ENCODE measurements at regions of chr1 and their contacts with region 1.

Region 1: DNA sequence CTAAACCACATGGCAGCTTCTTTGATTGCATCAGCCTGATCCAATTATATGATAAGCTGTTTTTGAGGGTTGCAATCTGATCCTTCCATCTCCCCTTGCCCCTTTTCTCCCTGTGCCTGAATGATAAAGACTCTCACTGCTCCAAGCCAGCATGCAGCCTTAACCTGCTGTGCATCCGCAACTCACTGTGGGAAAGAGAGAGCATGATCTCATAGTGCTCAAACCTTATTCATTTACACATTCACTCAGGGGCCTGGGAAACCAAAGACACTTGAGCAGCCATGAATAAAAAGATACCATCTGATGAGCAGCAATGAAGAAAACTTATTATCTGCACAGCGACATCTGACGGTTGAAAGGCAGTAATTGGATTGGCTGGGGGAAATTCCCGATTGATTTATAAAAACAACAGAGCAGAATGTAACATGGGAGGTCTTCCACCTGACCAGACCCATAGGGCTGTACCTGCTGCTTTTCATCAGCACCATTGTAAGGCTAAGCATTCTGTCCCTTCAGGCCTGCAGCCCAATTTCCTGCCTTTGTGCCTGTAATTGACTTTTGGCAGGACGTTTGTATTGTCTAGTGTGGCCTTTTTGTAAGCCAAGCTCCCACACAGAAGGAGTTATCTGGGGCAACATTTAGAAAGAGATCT is 62.5 kb downstream of the KIAA0040 start:
- DNase-seq: no peak
- ATAC-seq: no peak

Region 2: DNA sequence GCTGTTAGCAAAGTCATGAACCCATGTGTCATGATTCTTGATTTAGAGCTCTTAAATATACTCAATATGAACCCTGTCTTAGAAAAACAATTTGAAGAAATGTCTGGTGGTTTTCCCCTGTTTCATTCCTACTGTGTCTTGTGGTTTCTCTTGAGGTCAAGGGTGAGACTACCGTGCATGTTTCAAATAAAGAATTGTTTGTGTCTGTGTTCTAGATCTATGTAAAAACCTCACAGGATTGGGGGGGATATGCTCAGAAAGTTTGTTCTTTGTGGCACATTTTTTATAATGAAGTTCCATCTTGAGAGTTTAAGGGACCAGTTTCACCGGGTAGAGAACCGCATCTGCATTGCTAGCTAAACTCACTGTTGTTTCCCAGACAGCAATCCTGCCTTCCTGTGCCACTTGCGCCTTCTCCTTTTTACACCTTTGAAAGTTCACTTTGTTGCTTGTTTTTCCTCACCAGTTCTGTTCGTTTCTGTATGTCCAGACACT is 161.3 kb before region 1 on chr1:
- intact Hi-C with region 1: no loop called
- DNase-seq: no peak
- ATAC-seq: no peak

Region 3: GRCh38 chr1:175035865-175036264 is 94.3 kb before region 1 on chr1:
- intact Hi-C with region 1: loop called in 1 of 2 experiments (anchors 5 kb)
- DNase-seq: no peak
- ATAC-seq: no peak

Region 4: DNA sequence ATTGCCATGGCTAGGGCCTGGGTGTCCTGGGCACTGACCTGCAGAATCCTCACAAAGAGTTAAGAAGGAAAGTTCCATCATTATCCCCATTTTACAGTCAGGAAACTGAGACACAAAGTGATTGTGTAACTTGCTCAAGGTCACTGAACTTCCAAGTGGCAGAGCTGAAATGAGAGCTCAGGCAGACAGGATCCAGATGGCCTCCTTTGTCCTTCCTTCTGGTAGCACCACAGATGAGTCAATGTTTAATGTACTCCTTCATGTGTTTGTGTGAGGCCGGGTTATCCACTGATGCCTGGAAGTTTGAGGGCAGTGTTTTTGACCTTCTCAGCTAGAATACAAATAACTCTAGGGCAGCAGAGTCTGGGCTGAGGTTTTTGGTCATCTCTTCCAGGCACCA is 406.2 kb after region 1 on chr1:
- intact Hi-C with region 1: no loop called
- DNase-seq: no peak
- ATAC-seq: no peak